Activated CD4-positive, alpha-beta T cell treated with anti-CD3 and anti-CD28 coated beads, Interleukin-2, amount 10 ng/mL, durations not matched to agents 7 days and 5 days (primary cell): ENCODE measurements at regions of chr11 and their contacts with region 1.

Region 1: GRCh38 chr11:47969401-47969800 is 11.0 kb upstream of the PTPRJ start:
- DNase-seq: no peak
- H3K4me3 Mint-ChIP-seq: no peak overlapping the region
- H3K27ac Mint-ChIP-seq: no peak overlapping the region
- H3K4me1 Mint-ChIP-seq: peaks cover 4% of the 10 kb centered on the region
- H3K27me3 Mint-ChIP-seq: no peaks in the 10 kb centered on the region

Region 2: DNA sequence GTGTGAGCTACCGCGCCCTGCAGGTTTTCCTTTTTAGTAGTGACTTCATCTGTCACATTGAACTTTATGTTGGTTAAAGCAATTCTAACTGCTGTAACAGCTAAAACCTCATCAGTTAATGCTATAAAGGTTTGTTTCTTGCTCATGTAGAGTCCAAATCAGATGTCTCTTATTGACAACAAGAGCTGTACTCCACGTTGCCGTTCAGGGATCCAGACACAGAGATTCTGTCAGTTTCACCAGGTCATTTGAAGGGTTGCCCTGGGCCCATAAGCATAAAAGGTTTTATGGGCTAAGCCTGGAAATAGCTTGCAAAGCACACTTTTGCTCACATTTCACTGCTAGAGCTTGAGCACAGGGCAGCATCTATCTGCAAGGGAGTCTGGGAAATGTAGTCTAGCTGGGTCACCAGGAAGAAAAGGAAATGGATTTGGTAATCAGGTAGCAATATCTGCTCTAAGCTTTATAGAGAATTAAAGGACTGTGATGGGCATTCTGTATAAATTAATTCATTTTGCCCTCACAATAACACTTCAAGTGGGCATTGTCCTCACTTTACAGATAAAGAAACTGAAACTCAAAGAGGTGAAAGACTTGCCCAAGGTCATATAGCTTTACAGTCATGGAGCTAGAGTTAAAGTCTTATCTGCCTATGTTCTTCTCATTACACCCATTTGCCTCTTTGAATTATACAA is 14.2 kb before region 1 on chr11:
- CTCF ChIA-PET with region 1: interaction called, 11 read pairs
- POLR2A ChIA-PET with region 1: interaction called, 7 read pairs
- DNase-seq: no peak
- H3K4me3 Mint-ChIP-seq: no peak overlapping the region
- H3K27ac Mint-ChIP-seq: no peak overlapping the region
- H3K4me1 Mint-ChIP-seq: peaks cover 30% of the 10 kb centered on the region
- H3K27me3 Mint-ChIP-seq: no peaks in the 10 kb centered on the region